MCF 10A (cell line): ENCODE measurements at regions of chr17 and their contacts with region 1.

Region 1: DNA sequence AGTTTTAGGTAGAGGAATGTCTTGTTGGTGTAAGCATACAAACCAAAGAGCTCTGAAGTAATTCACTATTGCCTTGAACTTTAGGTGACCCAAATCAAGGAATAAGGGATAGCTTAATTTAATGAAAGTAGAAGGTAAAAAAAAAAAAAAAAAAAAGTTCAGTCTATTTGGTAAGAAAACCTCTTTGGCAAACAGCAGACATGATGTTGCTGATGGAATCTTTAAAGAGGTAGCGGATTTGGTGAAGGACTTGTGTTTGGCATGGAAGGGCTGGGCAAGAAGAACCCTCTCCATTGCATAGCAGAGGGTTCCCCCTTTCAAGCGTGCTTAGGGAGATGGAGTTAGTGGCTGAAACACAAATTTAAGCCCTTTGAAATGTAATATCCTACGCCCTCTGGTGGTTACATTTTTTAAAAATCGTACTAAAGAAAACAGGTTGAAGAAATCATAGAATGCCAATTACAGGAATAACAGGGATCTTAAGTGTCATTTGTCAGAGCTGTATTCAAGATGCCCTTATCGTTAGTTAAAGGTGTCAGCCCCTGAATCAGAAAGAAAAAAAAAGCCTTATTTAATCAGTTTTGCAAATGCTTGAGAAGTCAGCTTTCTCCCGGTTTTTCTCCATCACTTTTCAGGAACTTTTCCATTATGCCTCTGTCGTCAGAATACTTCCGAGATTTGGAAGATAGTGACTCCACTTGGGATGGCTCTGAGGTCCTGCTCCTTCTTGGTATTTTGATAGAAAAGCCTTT is 383.1 kb downstream of the KCNJ2 start:
- DNase-seq: peak; percentile 57
- H3K4me3 Mint-ChIP-seq: no peak overlapping the region
- H3K27ac Mint-ChIP-seq: no peak overlapping the region
- H3K4me1 Mint-ChIP-seq: peaks cover 8% of the 10 kb centered on the region
- H3K27me3 Mint-ChIP-seq: no peaks in the 10 kb centered on the region
- CTCF ChIP-seq: peak; percentile 54

Region 2: DNA sequence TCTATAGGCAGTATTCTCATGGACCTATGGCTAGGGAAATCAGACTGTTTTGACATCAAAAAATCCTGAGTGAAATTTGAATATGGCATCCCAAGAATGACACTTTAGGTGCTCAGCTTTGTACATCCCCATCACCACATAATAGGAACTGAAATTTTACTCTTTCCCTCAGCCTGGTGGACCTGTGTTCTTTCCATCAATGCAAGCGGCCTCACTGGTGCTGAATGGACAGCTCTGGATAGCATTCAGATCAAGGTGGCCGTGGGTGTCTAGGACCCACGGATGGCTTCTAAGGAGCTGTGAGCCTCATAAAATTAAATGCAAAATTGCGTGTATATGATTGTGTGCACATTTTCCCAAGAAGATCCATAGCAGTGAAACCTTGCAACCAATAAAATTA is 985.3 kb before region 1 on chr17:
- CTCF ChIA-PET with region 1: interaction called, 23 read pairs
- POLR2A ChIA-PET with region 1: no interaction called
- intact Hi-C with region 1: loop called (anchors 5 kb)
- DNase-seq: peak; percentile 22
- H3K4me3 Mint-ChIP-seq: no peak overlapping the region
- H3K27ac Mint-ChIP-seq: no peak overlapping the region
- H3K4me1 Mint-ChIP-seq: no peaks in the 10 kb centered on the region
- H3K27me3 Mint-ChIP-seq: no peaks in the 10 kb centered on the region
- CTCF ChIP-seq: no peak

Region 3: GRCh38 chr17:69575346-69575761 is 977.1 kb before region 1 on chr17:
- CTCF ChIA-PET with region 1: interaction called, 23 read pairs
- POLR2A ChIA-PET with region 1: no interaction called
- intact Hi-C with region 1: no loop called
- DNase-seq: peak; percentile 45
- H3K4me3 Mint-ChIP-seq: no peak overlapping the region
- H3K27ac Mint-ChIP-seq: no peak overlapping the region
- H3K4me1 Mint-ChIP-seq: no peaks in the 10 kb centered on the region
- H3K27me3 Mint-ChIP-seq: no peaks in the 10 kb centered on the region
- CTCF ChIP-seq: no peak

Region 4: DNA sequence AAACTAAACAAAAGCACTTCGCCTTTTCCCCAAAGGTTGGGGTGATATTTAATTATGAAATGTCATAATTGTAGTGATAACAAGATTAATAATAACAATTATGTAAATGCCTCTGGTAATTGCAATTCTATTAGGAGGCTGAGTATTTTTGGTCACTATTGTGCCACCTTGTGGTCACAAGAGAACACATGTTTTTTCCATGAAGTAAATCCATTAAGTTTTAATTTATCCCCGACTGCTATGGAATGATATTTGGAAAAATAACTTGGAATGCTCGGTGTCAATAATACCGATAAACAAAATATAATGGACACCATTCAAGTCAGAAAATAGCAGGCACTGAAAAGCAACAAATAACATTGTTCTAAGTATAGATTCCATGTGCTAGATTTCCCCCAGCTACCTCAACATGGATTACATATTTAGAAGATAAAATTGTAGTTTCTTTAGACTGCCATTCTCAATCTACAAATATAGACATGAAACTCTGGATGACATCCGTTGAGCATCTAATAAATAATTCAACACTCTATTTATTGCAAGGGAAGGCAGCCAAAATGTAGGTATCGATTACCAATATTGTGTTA is 408.1 kb before region 1 on chr17:
- CTCF ChIA-PET with region 1: interaction called, 6 read pairs
- POLR2A ChIA-PET with region 1: no interaction called
- intact Hi-C with region 1: loop called (anchors 5 kb)
- DNase-seq: peak; percentile 49
- H3K4me3 Mint-ChIP-seq: no peak overlapping the region
- H3K27ac Mint-ChIP-seq: peak overlapping the region; percentile 33
- H3K4me1 Mint-ChIP-seq: no peaks in the 10 kb centered on the region
- H3K27me3 Mint-ChIP-seq: no peaks in the 10 kb centered on the region
- CTCF ChIP-seq: peak; percentile 44

Region 5: DNA sequence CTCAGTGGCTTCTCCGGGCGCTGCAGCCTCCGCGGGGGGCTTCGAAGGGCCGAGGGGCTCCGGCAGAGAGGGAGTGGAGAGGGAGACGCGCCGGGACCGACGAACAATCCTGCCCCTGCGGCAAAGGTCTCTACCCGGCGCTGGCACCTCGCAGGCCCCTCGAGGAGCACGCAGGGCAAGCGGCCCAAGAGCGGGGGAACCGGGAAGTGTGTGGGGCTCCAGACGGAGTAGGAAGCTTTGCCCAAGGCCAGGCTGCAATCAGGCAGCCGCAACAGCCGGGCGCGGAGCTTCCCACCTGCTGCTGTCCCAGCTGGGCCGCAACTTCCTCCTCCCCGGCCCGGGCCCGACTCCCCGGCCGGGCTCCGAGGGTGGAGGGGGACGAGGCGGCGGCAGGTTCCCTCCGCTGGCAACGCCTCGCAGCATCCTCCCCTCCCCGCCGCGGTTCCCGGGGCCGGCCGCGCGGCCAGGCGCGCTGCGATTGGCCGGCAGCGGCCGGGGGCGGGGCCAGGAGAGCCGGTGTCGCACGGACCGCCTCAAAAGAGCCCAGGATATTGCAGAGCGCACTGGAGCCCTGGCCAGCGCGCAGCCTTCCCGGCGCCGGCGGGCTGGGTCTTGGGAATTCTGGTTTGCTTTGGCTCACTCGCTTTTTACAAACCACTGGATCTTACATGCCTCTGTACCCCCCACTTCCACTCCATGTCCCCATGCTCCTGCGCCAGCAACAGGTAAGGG is 383.3 kb before region 1 on chr17 and contains the start of gene KCNJ2:
- CTCF ChIA-PET with region 1: interaction called, 6 read pairs
- POLR2A ChIA-PET with region 1: interaction called, 3 read pairs
- intact Hi-C with region 1: loop called (anchors 5 kb)
- DNase-seq: peak; percentile 76
- H3K4me3 Mint-ChIP-seq: peak within 1 kb of the TSS; percentile 76
- H3K27ac Mint-ChIP-seq: peak within 1 kb of the TSS; percentile 10
- H3K4me1 Mint-ChIP-seq: peaks cover 34% of the 10 kb centered on the region
- H3K27me3 Mint-ChIP-seq: no peaks in the 10 kb centered on the region
- CTCF ChIP-seq: no peak
- total RNA-seq, gene KCNJ2: 0.19 and 0.54 TPM in 2 replicates

Region 6: GRCh38 chr17:70596926-70597325 is 44.5 kb after region 1 on chr17:
- CTCF ChIA-PET with region 1: no interaction called
- POLR2A ChIA-PET with region 1: no interaction called
- intact Hi-C with region 1: no loop called
- DNase-seq: no peak
- H3K4me3 Mint-ChIP-seq: no peak overlapping the region
- H3K27ac Mint-ChIP-seq: no peak overlapping the region
- H3K4me1 Mint-ChIP-seq: no peaks in the 10 kb centered on the region
- H3K27me3 Mint-ChIP-seq: no peaks in the 10 kb centered on the region
- CTCF ChIP-seq: no peak